ENCODE measurements at regions of chr2 and their contacts with region 1.

Region 1: DNA sequence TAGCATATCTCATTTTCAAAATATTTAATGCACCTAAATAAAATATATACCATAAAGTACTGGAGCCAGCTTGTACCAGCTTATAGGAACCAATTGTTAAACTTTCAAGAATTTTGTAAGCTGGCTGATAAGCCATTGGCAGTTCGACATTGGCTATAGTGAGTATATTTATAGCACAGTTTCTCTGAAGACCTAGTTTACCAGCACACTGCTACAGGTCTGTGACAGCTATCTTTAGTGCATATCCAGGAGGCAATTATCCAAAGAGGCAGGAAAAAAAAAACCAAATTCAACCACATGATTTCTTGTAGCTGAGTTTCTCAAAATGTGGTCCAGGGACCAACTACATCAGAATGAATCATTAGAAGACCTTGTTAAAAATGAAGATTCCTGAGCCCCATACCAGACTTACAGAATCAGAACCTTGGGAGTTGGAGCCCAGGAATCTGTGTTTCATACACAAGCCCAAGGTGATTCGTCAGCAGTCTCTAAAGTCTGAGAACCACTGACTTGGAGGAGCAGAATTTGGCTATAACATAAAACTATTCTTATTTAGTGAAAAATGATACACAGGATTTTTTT is 279.0 kb upstream of the NRP2 start:
- DNase-seq: no peak
- ATAC-seq: no peak

Region 2: DNA sequence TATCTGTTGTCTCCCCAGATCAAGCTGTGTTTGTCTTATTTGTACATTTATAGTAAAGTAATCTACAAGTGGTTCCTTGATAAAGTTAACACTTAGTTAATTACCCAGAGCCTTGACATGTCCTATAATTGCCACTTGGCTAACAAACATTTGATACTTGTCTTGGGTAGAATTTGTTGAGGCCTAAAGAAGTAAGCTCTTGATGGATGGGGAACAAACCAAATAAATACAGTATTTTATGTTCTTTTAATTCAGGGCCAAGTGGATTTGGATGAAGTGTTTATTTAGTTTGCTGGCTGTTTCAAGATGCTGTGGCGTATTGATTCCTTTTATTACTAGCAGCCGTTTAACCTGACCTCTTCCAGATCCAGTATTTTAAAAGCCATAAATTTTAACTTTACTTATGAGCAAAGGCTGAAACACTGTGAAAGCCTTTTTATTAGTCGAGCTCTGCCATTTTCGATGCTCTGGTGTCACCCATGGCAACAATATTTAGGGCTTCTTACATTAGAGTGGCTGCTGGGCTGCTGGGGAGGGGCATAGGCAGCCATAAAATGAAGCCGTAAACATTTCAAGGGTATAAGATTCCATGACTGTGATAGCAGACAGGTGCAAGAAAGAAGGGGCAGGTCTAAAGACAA is 122.6 kb before region 1 on chr2:
- intact Hi-C with region 1: loop called (anchors 5 kb)
- DNase-seq: no peak
- ATAC-seq: no peak

Region 3: GRCh38 chr2:205386109-205386508 is 17.2 kb before region 1 on chr2:
- intact Hi-C with region 1: no loop called
- DNase-seq: no peak
- ATAC-seq: peak; percentile 79

Region 4: DNA sequence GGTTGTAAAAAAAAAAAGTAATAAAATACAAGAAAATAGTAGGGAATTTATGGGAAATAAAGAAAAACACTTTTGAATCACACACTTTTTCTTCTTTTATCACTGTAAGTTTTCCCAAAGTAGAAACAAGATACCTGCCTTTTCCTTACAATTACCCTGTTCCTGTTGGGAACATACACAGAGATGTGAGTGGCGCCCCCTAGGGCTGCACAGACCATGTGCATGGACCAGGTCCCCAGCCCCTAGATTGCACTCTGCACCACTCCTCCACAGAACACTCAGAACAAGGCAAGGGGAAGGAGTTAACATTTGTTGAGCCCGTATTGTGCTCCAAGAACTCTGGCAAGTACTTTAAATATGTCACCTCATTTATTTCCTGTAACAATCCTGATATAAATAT is 160.3 kb after region 1 on chr2:
- intact Hi-C with region 1: no loop called
- DNase-seq: no peak
- ATAC-seq: no peak

Measured in sciatic nerve (tissue), 2 donors.